ENCODE measurements at regions of chr3 and their contacts with region 1.

Region 1: DNA sequence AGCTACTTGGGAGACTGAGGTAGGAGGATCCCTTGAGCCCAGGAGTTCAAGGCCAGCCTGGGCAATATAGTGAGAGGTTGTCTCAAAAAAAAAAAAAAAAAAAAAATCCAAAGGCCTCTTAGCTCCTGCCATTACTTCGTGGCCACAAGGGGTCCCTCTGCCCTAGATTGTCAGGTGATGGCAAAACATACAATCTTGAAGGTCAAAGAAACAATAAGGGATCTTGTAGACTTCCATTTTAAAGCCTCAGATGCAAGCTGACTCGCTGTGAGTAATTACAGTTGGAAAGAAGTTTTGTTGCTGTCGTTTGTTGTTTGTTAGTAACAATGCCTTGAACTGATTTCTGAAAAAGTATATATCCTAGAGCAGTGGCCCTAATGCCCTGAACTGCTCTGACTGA is 55.9 kb upstream of the PLCL2 start:
- DNase-seq: no peak
- ATAC-seq: no peak
- H3K4me3 ChIP-seq: no peak overlapping the region
- H3K27ac ChIP-seq: no peak overlapping the region
- H3K4me1 ChIP-seq: peaks cover 0 to 10% (median 0%) of the 10 kb centered on the region in 9 donors
- H3K27me3 ChIP-seq: no peaks in the 10 kb centered on the region
- CTCF ChIP-seq: peak in 7 of 9 donors; percentile 11 to 49 (median 36)

Region 2: GRCh38 chr3:16618721-16619120 is 210.1 kb before region 1 on chr3:
- intact Hi-C with region 1: loop called in 1 of 10 experiments (anchors 10 kb)
- DNase-seq: no peak
- ATAC-seq: no peak
- H3K4me3 ChIP-seq: no peak overlapping the region
- H3K27ac ChIP-seq: no peak overlapping the region
- H3K4me1 ChIP-seq: no peaks in the 10 kb centered on the region
- H3K27me3 ChIP-seq: no peaks in the 10 kb centered on the region
- CTCF ChIP-seq: no peak

Region 3: DNA sequence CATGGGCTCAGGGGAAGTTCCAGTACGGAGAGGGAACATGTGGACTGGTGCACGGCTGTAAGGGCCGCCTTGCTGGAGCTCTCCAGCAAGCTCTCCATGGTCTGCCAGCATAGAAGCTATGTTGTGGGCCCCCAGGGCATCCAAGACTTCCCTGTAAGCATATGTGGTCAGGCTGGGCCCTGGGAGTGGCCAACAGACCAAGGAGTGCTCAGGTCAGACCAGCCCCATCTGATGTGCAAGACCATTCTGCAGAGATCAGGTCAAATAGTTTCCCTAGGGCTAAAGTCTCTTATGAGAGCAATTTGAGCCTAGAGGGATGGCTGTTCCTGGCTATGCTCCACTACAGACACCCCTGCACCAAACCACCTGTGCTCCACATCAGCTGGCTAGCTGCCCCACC is 113.5 kb before region 1 on chr3:
- intact Hi-C with region 1: no loop called
- DNase-seq: no peak
- ATAC-seq: no peak
- H3K4me3 ChIP-seq: no peak overlapping the region
- H3K27ac ChIP-seq: no peak overlapping the region
- H3K4me1 ChIP-seq: peaks cover 0 to 2% (median 0%) of the 10 kb centered on the region in 9 donors
- H3K27me3 ChIP-seq: no peaks in the 10 kb centered on the region
- CTCF ChIP-seq: no peak

Region 4: DNA sequence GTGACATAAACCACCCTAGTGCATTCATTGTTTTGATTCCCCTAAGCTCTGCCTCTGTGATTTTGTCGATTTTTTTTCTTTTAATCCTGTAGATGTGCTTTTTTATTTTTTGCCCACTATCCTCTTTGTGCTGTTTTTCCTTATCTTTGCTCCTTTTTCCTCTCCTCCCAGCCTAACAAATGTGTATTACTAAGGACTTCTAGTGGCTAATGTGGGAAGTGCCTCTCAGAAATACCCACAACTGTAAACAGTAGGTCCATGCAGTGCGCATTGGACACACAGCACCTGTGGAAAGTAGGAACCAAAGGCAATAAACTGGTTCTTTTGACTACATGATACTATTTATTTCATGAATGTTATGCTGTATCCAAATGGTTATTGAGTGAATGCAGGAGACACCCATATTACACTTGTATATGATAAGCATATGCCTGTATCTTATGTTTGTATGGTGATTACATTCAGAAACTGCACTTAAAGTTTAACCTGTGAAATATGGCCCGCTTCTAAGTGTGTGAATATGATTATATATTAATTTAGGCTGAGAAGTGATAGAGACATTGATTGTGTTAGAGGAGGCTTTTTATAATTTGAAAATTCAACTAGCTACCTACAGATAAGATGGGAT is 203.7 kb after region 1 on chr3:
- intact Hi-C with region 1: loop called in 2 of 10 experiments (anchors 2 to 5 kb)
- DNase-seq: no peak
- ATAC-seq: peak in 7 of 8 donors; percentile 37 to 84 (median 66)
- H3K4me3 ChIP-seq: no peak overlapping the region
- H3K27ac ChIP-seq: no peak overlapping the region
- H3K4me1 ChIP-seq: peaks cover 0 to 37% (median 3%) of the 10 kb centered on the region in 9 donors
- H3K27me3 ChIP-seq: no peaks in the 10 kb centered on the region
- CTCF ChIP-seq: peak; percentile 45 to 77 (median 64)

Measured in heart right ventricle (tissue), 16 donors.